Colonic mucosa (tissue), 4 donors: ENCODE measurements at regions of chr20 and their contacts with region 1.

Region 1: DNA sequence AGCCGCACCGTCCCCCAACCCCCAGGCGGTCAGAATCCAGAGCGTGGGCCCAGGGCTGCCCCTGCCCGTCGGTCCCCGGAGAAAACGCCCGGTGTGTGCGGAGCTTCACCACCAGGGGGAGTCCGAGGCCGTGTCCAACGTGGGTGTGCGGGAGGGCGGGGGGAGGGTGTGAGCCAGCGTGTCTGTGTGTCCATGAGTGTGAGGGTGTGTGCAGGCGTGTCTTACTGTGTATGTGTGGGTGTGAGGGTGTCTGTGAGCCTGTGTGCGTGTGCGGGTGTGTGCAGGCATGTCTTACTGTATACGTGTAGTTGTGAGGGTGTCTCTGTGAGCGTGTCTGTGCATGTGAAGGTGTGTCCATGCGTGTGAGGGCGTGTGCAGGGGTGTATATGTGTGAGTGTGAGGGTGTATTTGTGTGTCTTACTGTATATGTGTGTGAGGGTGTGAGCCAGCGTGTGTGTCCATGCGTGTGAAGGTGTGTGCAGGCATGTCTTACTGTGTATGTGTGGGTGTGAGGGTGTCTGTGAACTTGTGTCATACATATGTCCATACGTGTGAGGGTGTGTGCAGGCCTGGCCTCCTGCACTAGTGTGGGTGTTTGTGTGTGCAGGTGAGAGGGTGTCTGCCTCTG is 24.6 kb upstream of the GATA5 start:
- DNase-seq: peak; percentile 80
- H3K4me3 ChIP-seq: no peak overlapping the region
- H3K27ac ChIP-seq: no peak overlapping the region
- H3K4me1 ChIP-seq: no peaks in the 10 kb centered on the region
- H3K27me3 ChIP-seq: no peaks in the 10 kb centered on the region
- CTCF ChIP-seq: peak; percentile 77

Region 2: DNA sequence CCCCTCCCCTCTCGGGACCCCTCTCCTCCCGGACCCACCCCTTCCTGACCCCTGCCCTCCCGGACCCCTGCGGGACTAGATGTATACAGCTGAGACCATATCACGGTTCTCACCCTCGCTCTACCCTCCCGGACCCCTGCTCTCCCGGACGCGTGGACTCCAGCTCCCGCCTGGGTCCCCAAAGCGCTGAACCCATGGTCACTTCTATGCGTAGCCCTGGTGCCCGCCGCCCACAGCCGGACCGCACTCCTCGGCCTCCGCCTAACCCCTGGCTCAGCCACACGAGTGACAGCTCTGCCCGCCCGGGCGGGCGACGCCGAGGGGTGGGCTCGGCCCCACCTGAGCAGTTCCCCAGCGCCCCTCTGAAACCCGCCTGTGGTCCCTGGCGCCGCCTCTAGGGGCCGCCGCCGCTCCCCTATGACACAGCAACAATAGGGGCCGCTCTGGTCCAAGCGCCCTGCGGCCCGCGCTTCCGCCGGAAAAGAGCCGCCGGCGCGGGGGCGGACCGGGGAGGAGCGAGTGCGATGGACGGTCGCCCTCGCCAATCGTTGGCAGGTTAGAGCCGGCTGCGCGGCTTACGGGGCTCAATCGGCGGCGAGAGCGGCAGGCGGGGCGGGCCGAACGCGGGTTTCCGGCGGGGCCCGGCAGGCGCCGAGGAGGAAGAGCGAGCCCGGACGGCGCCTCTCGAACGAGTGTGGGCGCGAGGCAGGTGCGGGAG is 197.9 kb before region 1 on chr20 and contains the start of gene ADRM1:
- intact Hi-C with region 1: loop called (anchors 10 kb)
- DNase-seq: peak; percentile 95
- H3K4me3 ChIP-seq: peak within 1 kb of the TSS; percentile 81
- H3K27ac ChIP-seq: peak within 1 kb of the TSS; percentile 89
- H3K4me1 ChIP-seq: peaks cover 18% of the 10 kb centered on the region
- H3K27me3 ChIP-seq: no peaks in the 10 kb centered on the region
- CTCF ChIP-seq: peak; percentile 96
- total RNA-seq, gene ADRM1: 70.5 to 109 TPM

Region 3: GRCh38 chr20:62409931-62410745 is 90.2 kb before region 1 on chr20:
- intact Hi-C with region 1: loop called (anchors 5 kb)
- DNase-seq: peak; percentile 81
- H3K4me3 ChIP-seq: no peak overlapping the region
- H3K27ac ChIP-seq: peak overlapping the region; percentile 85
- H3K4me1 ChIP-seq: peaks cover 30% of the 10 kb centered on the region
- H3K27me3 ChIP-seq: no peaks in the 10 kb centered on the region
- CTCF ChIP-seq: peak; percentile 31

Region 4: DNA sequence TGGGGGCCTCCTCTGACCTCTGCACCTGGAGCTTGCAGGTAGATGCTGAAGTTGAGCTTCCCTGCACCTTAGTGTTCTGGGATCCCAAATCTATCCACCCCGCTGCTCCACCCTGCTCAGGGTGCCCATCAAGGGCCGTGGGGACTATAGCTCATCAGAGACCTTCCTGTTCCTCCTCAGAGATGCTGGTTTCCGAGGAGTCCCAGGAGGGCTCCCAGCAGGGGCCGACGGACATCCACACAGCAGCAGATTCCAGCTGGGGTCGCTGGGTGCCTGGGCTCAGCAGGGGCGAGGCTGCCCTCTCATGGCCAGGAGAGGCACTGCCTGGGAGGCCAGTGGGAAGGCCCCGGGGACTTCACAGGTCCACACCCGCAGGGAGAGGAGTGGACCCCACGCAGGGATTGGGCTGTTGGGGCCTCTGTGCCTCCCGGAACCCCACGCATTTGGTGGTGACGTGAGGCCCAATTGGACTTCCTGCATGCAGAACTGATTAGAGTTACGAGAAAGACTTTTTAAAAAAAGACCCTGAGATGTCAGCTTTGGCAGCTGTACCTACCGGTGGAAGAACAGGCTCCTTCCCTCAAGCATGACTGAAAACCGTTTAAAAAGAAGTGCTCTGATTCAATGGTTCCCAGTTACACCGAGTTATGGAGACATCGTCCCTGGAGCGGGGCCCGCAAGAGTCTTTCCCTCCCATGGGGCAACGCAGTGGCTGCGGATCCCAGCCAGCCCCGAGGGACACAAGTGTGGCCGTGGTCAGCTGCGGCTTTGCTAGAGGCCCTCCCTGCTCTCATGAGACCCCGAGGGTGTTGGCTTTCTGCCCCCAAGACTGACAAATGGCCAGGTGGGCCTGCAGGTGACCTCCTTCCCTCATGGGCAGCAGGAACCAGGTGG is 116.6 kb after region 1 on chr20:
- intact Hi-C with region 1: loop called (anchors 2 kb)
- DNase-seq: peak; percentile 71
- H3K4me3 ChIP-seq: no peak overlapping the region
- H3K27ac ChIP-seq: no peak overlapping the region
- H3K4me1 ChIP-seq: no peaks in the 10 kb centered on the region
- H3K27me3 ChIP-seq: no peaks in the 10 kb centered on the region
- CTCF ChIP-seq: peak; percentile 98

Region 5: GRCh38 chr20:62791301-62792181 is 291.2 kb after region 1 on chr20:
- intact Hi-C with region 1: loop called (anchors 1 kb)
- DNase-seq: peak; percentile 82
- H3K4me3 ChIP-seq: no peak overlapping the region
- H3K27ac ChIP-seq: no peak overlapping the region
- H3K4me1 ChIP-seq: peaks cover 4% of the 10 kb centered on the region
- H3K27me3 ChIP-seq: no peaks in the 10 kb centered on the region
- CTCF ChIP-seq: peak; percentile 89

Region 6: GRCh38 chr20:63253438-63254236 is 753.3 kb after region 1 on chr20:
- intact Hi-C with region 1: no loop called
- DNase-seq: no peak
- H3K4me3 ChIP-seq: no peak overlapping the region
- H3K27ac ChIP-seq: no peak overlapping the region
- H3K4me1 ChIP-seq: no peaks in the 10 kb centered on the region
- H3K27me3 ChIP-seq: peaks cover 32% of the 10 kb centered on the region
- CTCF ChIP-seq: no peak